Mucosa of descending colon (tissue), 3 donors: ENCODE measurements at regions of chr20 and their contacts with region 1.

Region 1: DNA sequence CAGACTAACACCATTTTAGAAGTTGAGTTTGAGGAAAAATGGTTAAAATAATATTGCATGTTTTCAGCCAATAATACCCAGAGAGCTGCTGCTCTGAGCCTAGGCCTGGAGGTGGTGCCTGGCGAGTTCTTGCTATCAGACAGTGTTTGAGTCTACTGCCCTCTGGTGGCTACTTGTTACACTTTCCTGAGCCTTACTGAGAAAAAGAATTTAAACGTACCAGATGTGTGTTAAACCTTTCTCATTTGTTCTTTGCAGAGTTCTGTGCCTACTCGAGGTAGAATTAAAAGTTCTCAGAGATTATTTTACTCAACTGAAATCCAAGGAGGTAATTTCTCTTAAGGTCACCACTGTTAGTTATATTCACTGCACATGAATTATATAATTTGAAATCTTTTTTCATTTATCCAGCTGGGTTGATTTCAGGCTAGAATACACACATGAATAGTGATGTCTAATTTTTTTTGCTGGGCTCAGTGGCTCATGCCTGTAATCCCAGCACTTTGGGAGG is 38.2 kb downstream of the SHLD1 start:
- DNase-seq: peak; percentile 50 to 95 (median 73)
- ATAC-seq: peak; percentile 90
- H3K4me3 ChIP-seq: no peak overlapping the region
- H3K4me1 ChIP-seq: no peaks in the 10 kb centered on the region
- CTCF ChIP-seq: peak; percentile 57

Region 2: DNA sequence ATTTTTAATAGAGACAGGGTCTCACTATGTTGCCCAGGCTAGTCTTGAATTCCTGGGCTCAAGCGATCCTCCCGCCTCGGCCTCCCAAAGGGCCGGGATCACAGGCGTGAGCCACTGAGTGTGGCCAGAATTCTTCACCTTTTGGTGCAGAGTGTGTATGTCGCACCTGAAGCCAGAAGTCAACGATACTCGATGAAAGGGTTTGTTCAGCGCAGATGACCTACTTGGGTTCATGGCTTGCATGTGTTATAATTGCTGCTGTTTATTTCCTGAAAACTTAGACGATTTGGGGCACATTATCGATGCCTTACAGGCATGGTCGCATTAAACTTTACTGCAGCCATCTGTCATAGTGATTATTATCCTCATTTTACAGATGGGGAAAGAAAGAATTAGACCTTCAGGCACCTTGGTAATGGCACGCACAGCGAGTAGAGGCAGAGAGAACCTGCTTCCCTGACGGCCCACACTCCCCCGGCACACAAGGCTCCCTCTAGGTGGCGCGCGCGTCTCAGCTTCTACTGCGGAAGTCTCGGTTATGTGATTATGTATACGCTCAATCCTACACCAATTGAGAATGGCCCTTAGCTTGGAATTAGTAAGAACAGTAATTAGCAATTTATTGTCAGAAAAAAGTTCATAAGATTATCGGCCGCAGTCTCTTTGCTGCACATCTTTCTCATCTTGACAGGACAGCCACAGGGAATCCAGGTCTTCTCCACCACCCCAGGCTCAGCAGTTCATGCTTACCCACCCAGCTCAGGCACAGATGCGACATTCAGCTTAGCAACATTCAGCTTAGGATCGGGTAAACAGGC is 258.9 kb before region 1 on chr20:
- intact Hi-C with region 1: loop called (anchors 2 to 10 kb)
- DNase-seq: peak; percentile 89 to 96 (median 95)
- ATAC-seq: peak; percentile 94
- H3K4me3 ChIP-seq: no peak overlapping the region
- H3K4me1 ChIP-seq: no peaks in the 10 kb centered on the region
- CTCF ChIP-seq: peak; percentile 74

Region 3: DNA sequence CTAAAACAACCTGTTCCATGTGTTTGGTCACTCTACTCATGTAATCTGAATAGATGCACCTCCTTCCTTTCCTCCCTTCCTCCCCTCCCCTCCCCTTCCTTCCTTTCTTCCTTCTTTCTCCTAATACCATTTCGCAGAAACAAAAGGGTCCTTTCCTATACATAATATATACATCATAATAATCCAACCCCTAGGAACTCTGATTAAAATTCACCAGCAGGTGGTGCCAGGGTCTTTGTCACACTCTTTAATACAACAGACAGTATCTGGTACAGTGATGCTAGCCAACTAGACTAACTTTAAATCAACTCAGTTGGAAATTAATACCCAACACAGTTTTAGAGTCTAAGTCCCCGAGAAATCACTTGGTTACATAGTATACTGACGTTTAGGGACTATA is 219.4 kb before region 1 on chr20:
- intact Hi-C with region 1: loop called in 1 of 2 experiments (anchors 5 kb)
- DNase-seq: peak in 1 of 3 donors; percentile 86
- ATAC-seq: peak; percentile 79
- H3K4me3 ChIP-seq: no peak overlapping the region
- H3K4me1 ChIP-seq: no peaks in the 10 kb centered on the region
- CTCF ChIP-seq: no peak